HepG2 (cell line): ENCODE measurements at regions of chr17 and their contacts with region 1.

Region 1: DNA sequence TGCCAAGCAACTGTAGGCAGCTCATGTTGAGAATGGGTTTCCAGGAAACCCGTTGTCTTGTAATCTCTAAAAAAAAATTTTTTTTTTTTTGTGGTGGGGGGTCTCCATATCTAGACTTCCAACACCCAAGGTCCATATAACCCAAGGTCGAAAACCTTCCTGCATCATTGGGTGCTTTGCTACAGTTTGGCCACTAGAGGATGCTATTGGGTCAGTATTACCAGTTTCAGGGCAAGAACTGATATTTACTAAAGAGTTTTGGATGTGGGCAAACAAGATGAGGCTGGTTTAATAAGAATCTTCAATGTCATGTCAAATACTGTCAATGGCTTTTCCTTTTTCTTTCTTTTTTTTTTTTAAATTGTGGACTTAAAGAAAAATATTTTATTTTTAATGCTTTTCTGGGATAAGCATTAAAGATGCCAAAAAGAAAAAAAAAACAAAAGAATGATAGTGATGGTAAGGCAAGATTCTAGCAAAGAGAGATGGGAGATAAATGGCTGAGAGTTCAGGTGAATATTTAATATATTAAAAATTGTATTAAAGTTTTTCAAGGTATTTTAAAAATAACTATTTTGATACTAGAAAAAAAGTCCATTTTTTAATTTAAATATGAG is 62.2 kb downstream of the DHRS7C start:
- DNase-seq: peak; percentile 47
- ATAC-seq: peak; percentile 33; the same call in 1 of the 3 replicates
- H3K4me3 ChIP-seq: no peak overlapping the region
- H3K27ac ChIP-seq: no peak overlapping the region
- H3K4me1 ChIP-seq: no peaks in the 10 kb centered on the region
- H3K27me3 ChIP-seq: no peaks in the 10 kb centered on the region
- CTCF ChIP-seq: peak; percentile 80
- EP300 ChIP-seq: no peak
- POLR2A ChIP-seq: no peak
- RAD21 ChIP-seq: peak; percentile 48; the same call in 1 of the 2 replicates

Region 2: DNA sequence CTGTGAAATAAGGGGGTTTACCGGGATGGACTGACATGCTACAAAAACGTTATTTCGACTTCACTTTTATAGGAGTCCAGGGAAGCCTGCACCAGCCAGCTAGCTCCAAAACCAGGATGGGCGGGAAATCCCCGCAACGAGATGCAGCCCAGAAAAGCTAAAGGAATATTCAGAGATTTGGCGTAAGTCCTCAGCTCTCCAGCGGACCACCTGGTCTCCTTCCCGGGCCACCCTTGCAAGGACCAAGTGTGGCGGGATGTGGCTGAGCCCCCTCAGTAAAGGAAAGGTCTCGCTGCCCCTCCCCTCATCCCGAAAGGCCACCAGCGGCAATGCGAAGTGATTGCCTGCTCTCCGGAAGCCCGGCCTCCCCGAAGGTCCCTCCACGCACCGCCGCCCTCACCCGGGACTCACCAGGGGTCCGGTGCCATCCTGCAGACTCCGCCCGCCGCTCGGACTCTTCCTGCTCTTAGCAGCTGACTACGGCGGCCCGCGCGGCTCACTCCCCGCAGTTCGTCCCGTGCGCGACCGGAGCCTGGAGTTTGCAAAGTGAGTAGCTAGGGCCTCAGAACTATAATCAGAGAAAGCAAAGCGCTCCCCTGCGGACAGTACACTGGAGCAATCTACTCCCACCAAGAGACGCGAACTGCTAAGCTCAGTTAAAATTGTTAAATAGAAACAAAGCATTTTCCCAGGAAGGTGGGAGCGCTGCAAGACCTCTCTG is 153.6 kb before region 1 on chr17 and contains the start of gene STX8:
- CTCF ChIA-PET with region 1: no interaction called
- POLR2A ChIA-PET with region 1: no interaction called
- in situ Hi-C with region 1: no loop called
- intact Hi-C with region 1: loop called (anchors 1 kb)
- DNase-seq: peak; percentile 78
- ATAC-seq: peak; percentile 98
- H3K4me3 ChIP-seq: peak within 1 kb of the TSS; percentile 71 to 95 (median 81)
- H3K27ac ChIP-seq: peak within 1 kb of the TSS; percentile 36
- H3K4me1 ChIP-seq: 0 out of 2 replicates have a peak, but pooled peaks cover 6% of the 10 kb centered on the region
- H3K27me3 ChIP-seq: no peaks in the 10 kb centered on the region
- CTCF ChIP-seq: peak; percentile 43
- EP300 ChIP-seq: peak in 1 of 2 experiments; percentile 34; a peak in 1 of 4 replicates
- POLR2A ChIP-seq: peak; percentile 52 to 73
- RAD21 ChIP-seq: 0 out of 2 replicates have a peak, but pooled peaks have one; percentile 21
- total RNA-seq, gene STX8: 53.6 and 67.9 TPM in 2 replicates

Region 3: GRCh38 chr17:9594065-9594464 is 135.1 kb before region 1 on chr17:
- CTCF ChIA-PET with region 1: no interaction called
- POLR2A ChIA-PET with region 1: no interaction called
- in situ Hi-C with region 1: no loop called
- intact Hi-C with region 1: no loop called
- DNase-seq: no peak
- ATAC-seq: no peak
- H3K4me3 ChIP-seq: no peak overlapping the region
- H3K27ac ChIP-seq: no peak overlapping the region
- H3K4me1 ChIP-seq: no peaks in the 10 kb centered on the region
- H3K27me3 ChIP-seq: peaks cover 0 to 9% of the 10 kb centered on the region in 2 experiments; a peak in 2 of 5 replicates
- CTCF ChIP-seq: no peak
- EP300 ChIP-seq: no peak
- POLR2A ChIP-seq: no peak
- RAD21 ChIP-seq: no peak

Region 4: GRCh38 chr17:9632741-9633140 is 96.4 kb before region 1 on chr17:
- CTCF ChIA-PET with region 1: no interaction called
- POLR2A ChIA-PET with region 1: no interaction called
- in situ Hi-C with region 1: no loop called
- intact Hi-C with region 1: no loop called
- DNase-seq: no peak
- ATAC-seq: no peak
- H3K4me3 ChIP-seq: no peak overlapping the region
- H3K27ac ChIP-seq: no peak overlapping the region
- H3K4me1 ChIP-seq: no peaks in the 10 kb centered on the region
- H3K27me3 ChIP-seq: peaks cover 0 to 25% of the 10 kb centered on the region in 2 experiments; a peak in 3 of 5 replicates
- CTCF ChIP-seq: no peak
- EP300 ChIP-seq: no peak
- POLR2A ChIP-seq: no peak
- RAD21 ChIP-seq: no peak

Region 5: GRCh38 chr17:9644910-9645751 is 84.0 kb before region 1 on chr17 and contains the start of gene USP43:
- CTCF ChIA-PET with region 1: interaction called, 3 read pairs
- POLR2A ChIA-PET with region 1: no interaction called
- in situ Hi-C with region 1: no loop called
- intact Hi-C with region 1: loop called (anchors 5 kb)
- DNase-seq: peak; percentile 6
- ATAC-seq: peak; percentile 66
- H3K4me3 ChIP-seq: peak within 1 kb of the TSS; percentile 48 to 84 (median 62)
- H3K27ac ChIP-seq: peak within 1 kb of the TSS; percentile 61
- H3K4me1 ChIP-seq: peaks cover 47% of the 10 kb centered on the region
- H3K27me3 ChIP-seq: peaks cover 0 to 6% of the 10 kb centered on the region in 2 experiments; a peak in 2 of 5 replicates
- CTCF ChIP-seq: no peak
- EP300 ChIP-seq: 0 out of 4 replicates have a peak, but pooled peaks of 1 of the 2 experiments have one; percentile 3
- POLR2A ChIP-seq: peak in 1 of 2 experiments; percentile 33; a peak in 1 of 4 replicates
- RAD21 ChIP-seq: no peak
- total RNA-seq, gene USP43: 1.3 and 2.2 TPM in 2 replicates

Region 6: GRCh38 chr17:9743096-9743495 is 14.0 kb after region 1 on chr17:
- CTCF ChIA-PET with region 1: interaction called, 12 read pairs
- POLR2A ChIA-PET with region 1: no interaction called
- in situ Hi-C with region 1: no loop called
- intact Hi-C with region 1: loop called (anchors 2 kb)
- DNase-seq: no peak
- ATAC-seq: no peak
- H3K4me3 ChIP-seq: no peak overlapping the region
- H3K27ac ChIP-seq: no peak overlapping the region
- H3K4me1 ChIP-seq: no peaks in the 10 kb centered on the region
- H3K27me3 ChIP-seq: peaks cover 2 to 6% of the 10 kb centered on the region in 2 experiments; a peak in 1 of 5 replicates
- CTCF ChIP-seq: no peak
- EP300 ChIP-seq: no peak
- POLR2A ChIP-seq: no peak
- RAD21 ChIP-seq: no peak

Region 7: GRCh38 chr17:9750524-9750923 is 21.4 kb after region 1 on chr17:
- CTCF ChIA-PET with region 1: no interaction called
- POLR2A ChIA-PET with region 1: no interaction called
- in situ Hi-C with region 1: no loop called
- intact Hi-C with region 1: loop called (anchors 2 kb)
- DNase-seq: no peak
- ATAC-seq: no peak
- H3K4me3 ChIP-seq: no peak overlapping the region
- H3K27ac ChIP-seq: no peak overlapping the region
- H3K4me1 ChIP-seq: no peaks in the 10 kb centered on the region
- H3K27me3 ChIP-seq: 0 out of 5 replicates have a peak, but pooled peaks cover 0 to 2% of the 10 kb centered on the region in 2 experiments
- CTCF ChIP-seq: no peak
- EP300 ChIP-seq: no peak
- POLR2A ChIP-seq: no peak
- RAD21 ChIP-seq: no peak

Region 8: DNA sequence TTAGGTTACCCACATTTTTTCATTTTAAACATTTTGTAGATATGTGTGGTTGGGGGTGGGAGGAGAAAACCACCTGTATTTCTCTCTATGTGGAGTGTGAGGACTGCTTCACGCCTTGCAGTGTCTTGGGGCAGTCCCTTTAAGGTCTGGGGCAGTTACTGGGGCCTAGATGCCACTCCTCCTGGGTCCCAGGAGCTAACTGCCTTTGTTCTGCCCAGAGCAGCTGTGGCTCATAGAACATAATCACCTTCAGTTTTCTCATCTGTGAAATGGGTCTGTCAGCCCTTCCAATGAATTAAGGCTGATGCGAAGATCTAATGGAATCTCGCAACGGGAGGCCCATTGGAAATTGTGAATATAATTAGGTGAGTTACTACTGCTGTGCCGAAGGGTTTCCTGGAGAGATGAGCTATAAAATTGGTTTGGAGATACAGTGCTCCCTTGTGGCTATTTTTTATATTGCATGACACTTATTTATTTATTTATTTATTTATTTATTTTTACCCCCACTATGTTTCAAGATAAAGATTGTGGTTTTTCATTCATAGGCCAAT is 39.3 kb after region 1 on chr17:
- CTCF ChIA-PET with region 1: interaction called, 17 read pairs
- POLR2A ChIA-PET with region 1: no interaction called
- in situ Hi-C with region 1: no loop called
- intact Hi-C with region 1: loop called (anchors 2 kb)
- DNase-seq: peak; percentile 14
- ATAC-seq: no peak
- H3K4me3 ChIP-seq: no peak overlapping the region
- H3K27ac ChIP-seq: no peak overlapping the region
- H3K4me1 ChIP-seq: 0 out of 2 replicates have a peak, but pooled peaks cover 5% of the 10 kb centered on the region
- H3K27me3 ChIP-seq: peaks cover 6 to 9% of the 10 kb centered on the region in 2 experiments; a peak in 1 of 5 replicates
- CTCF ChIP-seq: no peak
- EP300 ChIP-seq: no peak
- POLR2A ChIP-seq: no peak
- RAD21 ChIP-seq: no peak

Region 9: GRCh38 chr17:9842057-9842758 is 113.1 kb after region 1 on chr17:
- CTCF ChIA-PET with region 1: no interaction called
- POLR2A ChIA-PET with region 1: no interaction called
- in situ Hi-C with region 1: no loop called
- intact Hi-C with region 1: no loop called
- DNase-seq: peak; percentile 13
- ATAC-seq: peak; percentile 89
- H3K4me3 ChIP-seq: peak overlapping the region in 2 of 3 experiments; percentile 33 to 53; a peak in 3 of 6 replicates
- H3K27ac ChIP-seq: no peak overlapping the region
- H3K4me1 ChIP-seq: peaks cover 27% of the 10 kb centered on the region
- H3K27me3 ChIP-seq: no peaks in the 10 kb centered on the region; a peak in 2 of 5 replicates
- CTCF ChIP-seq: no peak
- EP300 ChIP-seq: no peak
- POLR2A ChIP-seq: no peak
- RAD21 ChIP-seq: no peak

Region 10: GRCh38 chr17:9880582-9880999 is 151.4 kb after region 1 on chr17:
- CTCF ChIA-PET with region 1: no interaction called
- POLR2A ChIA-PET with region 1: no interaction called
- in situ Hi-C with region 1: no loop called
- intact Hi-C with region 1: no loop called
- DNase-seq: no peak
- ATAC-seq: no peak
- H3K4me3 ChIP-seq: no peak overlapping the region
- H3K27ac ChIP-seq: no peak overlapping the region
- H3K4me1 ChIP-seq: no peaks in the 10 kb centered on the region
- H3K27me3 ChIP-seq: peaks cover under 1 to 18% of the 10 kb centered on the region in 2 experiments; a peak in 4 of 5 replicates
- CTCF ChIP-seq: no peak
- EP300 ChIP-seq: no peak
- POLR2A ChIP-seq: no peak
- RAD21 ChIP-seq: no peak